Pancreas (tissue), 10 donors: ENCODE measurements at regions of chr1 and their contacts with region 1.

Region 1: DNA sequence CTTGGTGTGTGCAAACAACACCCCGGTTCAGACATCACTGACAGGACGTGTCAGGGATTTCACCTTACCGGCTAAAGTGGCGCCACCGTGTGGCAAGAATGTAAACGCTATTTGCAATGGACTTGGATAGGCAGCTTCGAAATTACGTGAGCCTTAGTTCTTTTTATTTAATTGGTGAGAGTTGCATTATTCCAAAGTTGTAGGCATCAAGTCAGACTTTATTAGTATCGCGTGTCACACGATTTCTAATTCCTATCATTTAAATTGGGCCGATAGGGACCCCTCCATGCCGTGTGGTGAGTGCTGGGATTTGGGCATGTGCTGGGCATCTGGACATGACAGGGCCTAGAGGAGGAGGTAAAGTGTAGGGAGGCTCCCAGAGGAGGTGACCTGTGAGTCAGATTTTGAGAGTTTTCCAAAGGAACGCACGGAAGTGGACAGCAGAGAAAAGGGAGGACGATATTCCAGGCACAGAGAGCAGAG is 14.5 kb upstream of the CPT2 start:
- DNase-seq: peak; percentile 60 to 92 (median 83)
- ATAC-seq: peak; percentile 65 to 78 (median 73)
- H3K4me3 ChIP-seq: no peak overlapping the region
- H3K27ac ChIP-seq: no peak overlapping the region
- H3K4me1 ChIP-seq: peaks cover 7 to 22% (median 9%) of the 10 kb centered on the region in 3 donors
- H3K27me3 ChIP-seq: no peaks in the 10 kb centered on the region
- CTCF ChIP-seq: peak; percentile 69 to 89 (median 80)

Region 2: DNA sequence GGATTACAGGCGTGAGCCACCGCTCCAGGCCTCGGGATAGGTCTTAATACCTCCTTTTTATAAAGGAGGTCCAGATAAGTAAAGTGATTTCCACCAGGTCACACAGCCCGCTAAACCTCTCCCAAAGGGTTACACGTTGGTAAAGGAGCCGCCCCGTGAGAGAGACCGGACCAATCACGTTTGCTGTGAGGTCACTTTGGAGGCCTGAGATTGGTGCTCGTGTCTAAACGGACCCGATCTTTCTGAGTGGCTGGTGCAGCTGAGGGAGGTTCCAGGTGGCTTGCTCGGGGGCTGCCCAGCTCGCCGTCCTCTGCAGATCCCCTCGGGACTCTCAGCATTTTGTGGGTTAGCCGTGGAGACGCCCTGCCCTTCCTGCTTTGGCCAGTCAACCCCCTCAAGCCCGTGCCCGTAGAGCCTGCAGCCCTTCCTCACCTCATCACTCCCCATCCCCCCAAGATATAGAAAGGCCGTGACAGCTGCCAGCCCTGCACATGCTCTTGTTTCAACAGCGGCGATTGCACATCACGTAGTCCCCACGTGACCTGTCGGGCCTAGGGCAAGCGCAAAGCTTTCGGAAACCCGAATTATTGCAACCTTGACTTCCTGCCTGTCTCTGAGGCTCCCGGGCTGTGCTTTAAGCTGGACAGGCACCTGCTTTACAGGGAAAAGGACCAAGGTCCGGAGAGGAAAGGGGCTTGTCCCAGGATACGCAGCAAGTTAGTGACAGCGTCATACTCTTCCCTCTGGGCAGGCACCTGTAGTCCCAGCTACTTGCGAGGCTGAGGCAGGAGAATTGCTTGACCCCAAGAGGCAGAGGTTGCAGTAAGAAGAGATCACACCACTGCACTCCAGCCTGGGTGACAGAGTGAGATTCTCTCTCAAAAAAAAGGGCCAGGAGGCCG is 479.0 kb before region 1 on chr1:
- intact Hi-C with region 1: loop called in 1 of 3 experiments (anchors 10 kb)
- DNase-seq: peak; percentile 81 to 94 (median 92)
- ATAC-seq: peak; percentile 81 to 93 (median 88)
- H3K4me3 ChIP-seq: peak overlapping the region; percentile 21 to 57 (median 35)
- H3K27ac ChIP-seq: peak overlapping the region; percentile 81 to 93 (median 92)
- H3K4me1 ChIP-seq: peaks cover 7 to 10% (median 10%) of the 10 kb centered on the region in 3 donors
- H3K27me3 ChIP-seq: no peaks in the 10 kb centered on the region
- CTCF ChIP-seq: no peak

Region 3: GRCh38 chr1:52913537-52913936 is 268.6 kb before region 1 on chr1:
- intact Hi-C with region 1: loop called in 1 of 3 experiments (anchors 10 kb)
- DNase-seq: no peak
- ATAC-seq: no peak
- H3K4me3 ChIP-seq: no peak overlapping the region
- H3K27ac ChIP-seq: no peak overlapping the region
- H3K4me1 ChIP-seq: no peaks in the 10 kb centered on the region
- H3K27me3 ChIP-seq: no peaks in the 10 kb centered on the region
- CTCF ChIP-seq: no peak